GM12878 (cell line): ENCODE measurements at regions of chr18 and their contacts with region 1.

Region 1: DNA sequence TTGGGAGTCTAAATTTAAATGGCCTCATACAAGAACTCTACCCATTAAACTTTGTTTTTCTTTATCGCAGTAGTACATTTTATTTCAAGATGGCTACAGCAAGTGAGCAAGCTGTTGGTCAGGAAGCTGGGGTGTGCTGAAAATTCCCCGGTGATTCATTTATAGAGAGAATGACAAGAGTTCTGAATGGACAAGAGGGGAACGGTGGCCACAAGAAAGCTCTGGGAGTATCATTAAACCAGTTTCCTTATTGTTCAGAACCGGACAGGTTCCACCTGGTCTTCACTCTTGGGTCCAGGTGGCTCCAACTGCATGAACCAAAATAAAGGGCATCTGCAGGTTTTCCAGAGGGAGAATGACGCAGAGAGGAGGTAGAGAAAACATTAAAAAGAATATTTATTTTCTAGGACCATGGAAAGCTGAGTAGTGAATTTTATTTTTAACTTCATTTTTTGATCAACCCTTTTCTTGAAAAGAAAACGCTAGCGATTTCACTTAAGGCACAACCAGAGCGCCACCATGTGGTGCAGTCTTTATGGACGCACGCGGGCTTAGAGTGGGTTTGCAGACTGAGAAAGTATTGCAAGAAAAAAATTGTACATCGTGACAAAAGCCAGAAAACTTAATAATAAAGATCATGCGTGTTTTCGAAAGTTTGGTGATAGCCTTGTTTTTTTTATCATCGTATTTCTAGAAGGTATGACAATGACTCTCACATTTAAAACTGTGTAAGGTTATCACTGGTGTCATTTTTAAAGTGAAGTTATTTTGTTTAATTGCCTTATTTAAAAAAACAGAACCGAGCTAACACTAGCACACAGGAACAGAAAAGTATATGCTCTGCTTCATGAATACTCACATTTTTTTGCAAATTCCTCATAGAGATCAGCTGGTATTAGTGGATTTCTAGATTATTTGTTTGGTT is 97.9 kb upstream of the NOL4 start:
- DNase-seq: peak; percentile 59
- ATAC-seq: peak; percentile 74
- H3K4me3 ChIP-seq: no peak overlapping the region
- H3K27ac ChIP-seq: peak overlapping the region; percentile 61
- H3K4me1 ChIP-seq: peaks cover 6% of the 10 kb centered on the region
- H3K27me3 ChIP-seq: no peaks in the 10 kb centered on the region
- CTCF ChIP-seq: peak; percentile 67 to 73 (median 69)
- EP300 ChIP-seq: peak; percentile 86 to 91; a peak in 3 of 4 replicates
- POLR2A ChIP-seq: no peak
- RAD21 ChIP-seq: peak; percentile 90

Region 2: GRCh38 chr18:33833847-33834246 is 488.8 kb before region 1 on chr18:
- CTCF ChIA-PET with region 1: interaction called, 87 read pairs
- POLR2A ChIA-PET with region 1: no interaction called
- RAD21 ChIA-PET with region 1: interaction called, 76 read pairs
- SMC1A ChIA-PET with region 1: interaction called, 67 read pairs
- in situ Hi-C with region 1: loop called (anchors 10 kb)
- intact Hi-C with region 1: loop called (anchors 2 kb)
- DNase-seq: no peak
- ATAC-seq: peak; percentile 68
- H3K4me3 ChIP-seq: no peak overlapping the region
- H3K27ac ChIP-seq: no peak overlapping the region
- H3K4me1 ChIP-seq: no peaks in the 10 kb centered on the region
- H3K27me3 ChIP-seq: no peaks in the 10 kb centered on the region
- CTCF ChIP-seq: no peak; a peak in 1 of 6 replicates
- EP300 ChIP-seq: no peak
- POLR2A ChIP-seq: no peak
- RAD21 ChIP-seq: peak; percentile 41

Region 3: GRCh38 chr18:34122724-34123334 is 199.8 kb before region 1 on chr18:
- CTCF ChIA-PET with region 1: interaction called, 341 read pairs
- POLR2A ChIA-PET with region 1: interaction called, 9 read pairs
- RAD21 ChIA-PET with region 1: interaction called, 247 read pairs
- SMC1A ChIA-PET with region 1: interaction called, 301 read pairs
- in situ Hi-C with region 1: loop called (anchors 5 kb)
- intact Hi-C with region 1: loop called (anchors 1 kb)
- DNase-seq: peak; percentile 17
- ATAC-seq: peak; percentile 81
- H3K4me3 ChIP-seq: no peak overlapping the region
- H3K27ac ChIP-seq: no peak overlapping the region
- H3K4me1 ChIP-seq: no peaks in the 10 kb centered on the region
- H3K27me3 ChIP-seq: no peaks in the 10 kb centered on the region
- CTCF ChIP-seq: peak; percentile 80 to 99 (median 91); a peak in 5 of 6 replicates
- EP300 ChIP-seq: no peak
- POLR2A ChIP-seq: no peak
- RAD21 ChIP-seq: peak; percentile 98

Region 4: GRCh38 chr18:34158881-34159690 is 163.5 kb before region 1 on chr18:
- CTCF ChIA-PET with region 1: interaction called, 60 read pairs
- POLR2A ChIA-PET with region 1: no interaction called
- RAD21 ChIA-PET with region 1: interaction called, 12 read pairs
- SMC1A ChIA-PET with region 1: interaction called, 44 read pairs
- in situ Hi-C with region 1: no loop called
- intact Hi-C with region 1: no loop called
- DNase-seq: no peak
- ATAC-seq: peak; percentile 83
- H3K4me3 ChIP-seq: no peak overlapping the region
- H3K27ac ChIP-seq: no peak overlapping the region
- H3K4me1 ChIP-seq: no peaks in the 10 kb centered on the region
- H3K27me3 ChIP-seq: no peaks in the 10 kb centered on the region
- CTCF ChIP-seq: peak in 2 of 3 experiments; percentile 28 to 51; a peak in 1 of 6 replicates
- EP300 ChIP-seq: no peak
- POLR2A ChIP-seq: no peak
- RAD21 ChIP-seq: peak; percentile 33; the same call in 1 of the 2 replicates

Region 5: GRCh38 chr18:34224423-34225217 is 98.0 kb before region 1 on chr18 and contains the start of gene NOL4:
- CTCF ChIA-PET with region 1: interaction called, 88 read pairs
- POLR2A ChIA-PET with region 1: interaction called, 7 read pairs
- RAD21 ChIA-PET with region 1: interaction called, 59 read pairs
- SMC1A ChIA-PET with region 1: interaction called, 63 read pairs
- in situ Hi-C with region 1: no loop called
- intact Hi-C with region 1: loop called (anchors 1 kb)
- DNase-seq: no peak
- ATAC-seq: peak; percentile 45
- H3K4me3 ChIP-seq: no peak within 1 kb of the TSS
- H3K27ac ChIP-seq: no peak within 1 kb of the TSS
- H3K4me1 ChIP-seq: no peaks in the 10 kb centered on the region
- H3K27me3 ChIP-seq: peaks cover 0 to 13% of the 10 kb centered on the region in 2 experiments
- CTCF ChIP-seq: peak in 2 of 3 experiments; percentile 51 to 66; a peak in 4 of 6 replicates
- EP300 ChIP-seq: no peak
- POLR2A ChIP-seq: no peak
- RAD21 ChIP-seq: peak; percentile 6; the same call in 1 of the 2 replicates
- polyA plus RNA-seq, gene NOL4: 1.3 to 2.8 TPM

Region 6: GRCh38 chr18:34297287-34297686 is 25.3 kb before region 1 on chr18:
- CTCF ChIA-PET with region 1: interaction called, 18 read pairs
- POLR2A ChIA-PET with region 1: interaction called, 16 read pairs
- RAD21 ChIA-PET with region 1: interaction called, 35 read pairs
- SMC1A ChIA-PET with region 1: interaction called, 16 read pairs
- in situ Hi-C with region 1: no loop called
- intact Hi-C with region 1: no loop called
- DNase-seq: no peak
- ATAC-seq: peak; percentile 18; the same call in 1 of the 3 replicates
- H3K4me3 ChIP-seq: no peak overlapping the region
- H3K27ac ChIP-seq: no peak overlapping the region
- H3K4me1 ChIP-seq: no peaks in the 10 kb centered on the region
- H3K27me3 ChIP-seq: no peaks in the 10 kb centered on the region
- CTCF ChIP-seq: no peak
- EP300 ChIP-seq: no peak
- POLR2A ChIP-seq: no peak
- RAD21 ChIP-seq: no peak

Region 7: GRCh38 chr18:34444622-34445021 is 122.0 kb after region 1 on chr18:
- CTCF ChIA-PET with region 1: interaction called, 12 read pairs
- POLR2A ChIA-PET with region 1: no interaction called
- RAD21 ChIA-PET with region 1: interaction called, 14 read pairs
- SMC1A ChIA-PET with region 1: interaction called, 3 read pairs
- in situ Hi-C with region 1: no loop called
- intact Hi-C with region 1: no loop called
- DNase-seq: no peak
- ATAC-seq: no peak
- H3K4me3 ChIP-seq: no peak overlapping the region
- H3K27ac ChIP-seq: no peak overlapping the region
- H3K4me1 ChIP-seq: no peaks in the 10 kb centered on the region
- H3K27me3 ChIP-seq: no peaks in the 10 kb centered on the region
- CTCF ChIP-seq: no peak
- EP300 ChIP-seq: no peak
- POLR2A ChIP-seq: no peak
- RAD21 ChIP-seq: no peak